ENCODE measurements at regions of chr4 and their contacts with region 1.

Region 1: GRCh38 chr4:73450398-73451004 is 14.5 kb downstream of the AFP start:
- DNase-seq: peak in 1 of 2 donors; percentile 13
- H3K4me3 ChIP-seq: no peak overlapping the region
- H3K27ac ChIP-seq: no peak overlapping the region
- H3K4me1 ChIP-seq: peaks cover 0 to 14% (median 5%) of the 10 kb centered on the region in 4 donors
- H3K27me3 ChIP-seq: no peaks in the 10 kb centered on the region
- CTCF ChIP-seq: no peak
- EP300 ChIP-seq: no peak
- POLR2A ChIP-seq: no peak

Region 2: DNA sequence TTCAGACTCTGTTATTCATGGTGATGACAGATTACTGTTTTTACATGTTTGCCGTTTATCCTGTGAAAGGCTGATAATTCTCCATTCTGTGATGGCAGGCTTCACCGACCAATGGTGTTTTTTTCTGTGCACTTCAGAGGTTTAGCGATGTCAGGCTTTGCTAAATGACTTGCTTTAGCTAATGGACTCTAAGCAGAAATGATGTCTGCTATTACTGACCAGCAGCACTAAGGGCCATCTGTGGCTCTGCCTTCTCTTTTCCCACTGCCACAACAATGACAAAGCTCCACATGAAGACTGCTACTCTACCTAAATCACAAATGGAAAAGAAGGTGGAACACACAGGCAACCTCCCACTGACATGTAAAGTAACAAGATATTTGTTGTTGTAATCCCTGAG is 114.8 kb before region 1 on chr4:
- intact Hi-C with region 1: loop called (anchors 10 kb)
- DNase-seq: peak in 1 of 2 donors; percentile 31
- H3K4me3 ChIP-seq: no peak overlapping the region
- H3K27ac ChIP-seq: no peak overlapping the region
- H3K4me1 ChIP-seq: no peaks in the 10 kb centered on the region
- H3K27me3 ChIP-seq: no peaks in the 10 kb centered on the region
- CTCF ChIP-seq: no peak
- EP300 ChIP-seq: no peak
- POLR2A ChIP-seq: no peak

Region 3: DNA sequence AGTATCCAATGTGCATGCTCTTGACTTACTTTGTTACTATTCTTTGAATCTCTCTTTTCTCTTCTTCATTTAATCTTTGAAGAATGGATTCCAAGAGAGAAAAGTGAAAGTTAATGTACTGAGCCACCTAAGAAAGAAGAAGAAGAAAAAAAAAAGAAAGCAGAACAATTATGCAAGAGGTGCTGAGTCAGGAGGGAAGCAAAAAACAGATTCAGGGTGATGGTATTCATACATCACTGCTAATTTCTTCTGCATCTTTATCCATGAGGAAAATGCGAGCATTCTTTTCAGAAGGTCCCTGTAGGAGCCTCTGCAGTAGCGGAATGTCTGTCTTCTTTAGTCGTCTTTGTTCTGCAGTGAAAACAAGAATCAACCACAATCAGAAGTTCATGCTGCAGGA is 125.9 kb after region 1 on chr4:
- intact Hi-C with region 1: no loop called
- DNase-seq: no peak
- H3K4me3 ChIP-seq: no peak overlapping the region
- H3K27ac ChIP-seq: peak overlapping the region in 1 of 5 donors; percentile 45
- H3K4me1 ChIP-seq: peaks cover 0 to 24% (median 15%) of the 10 kb centered on the region in 4 donors
- H3K27me3 ChIP-seq: no peaks in the 10 kb centered on the region
- CTCF ChIP-seq: no peak
- EP300 ChIP-seq: no peak
- POLR2A ChIP-seq: no peak

Measured in stomach (tissue), 19 donors.